T-cell (primary cell): ENCODE measurements at regions of chr13 and their contacts with region 1.

Region 1: DNA sequence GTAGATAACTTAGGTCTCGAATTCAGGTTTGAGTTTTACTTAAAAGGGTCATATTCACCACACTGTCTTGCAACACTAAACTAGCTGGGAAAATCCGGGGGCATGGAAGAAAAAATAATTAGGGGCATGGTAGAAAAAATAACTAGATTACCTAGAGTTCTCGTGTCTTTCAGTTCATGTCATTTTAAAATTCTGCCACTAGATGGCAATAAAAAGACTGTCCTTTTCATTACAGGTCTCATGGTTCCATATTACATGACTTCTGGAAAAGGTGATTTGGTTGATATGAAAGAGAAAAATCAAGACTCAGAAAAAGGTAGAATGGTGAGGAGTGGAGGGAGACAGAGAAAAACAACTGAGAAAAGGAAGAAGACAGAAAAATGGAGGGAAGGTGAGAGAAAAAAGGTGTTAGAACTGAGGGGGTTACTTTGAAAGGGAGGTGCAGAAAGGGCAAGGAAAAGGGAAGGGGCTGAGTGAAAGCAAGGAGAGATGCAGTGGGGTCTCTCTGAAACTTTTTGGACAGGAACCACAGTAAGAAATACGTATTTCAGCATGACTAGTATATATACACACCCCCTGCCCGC is 299.0 kb downstream of the KLF12 start:
- DNase-seq: peak in 1 of 35 experiments; percentile 68
- ATAC-seq: peak; percentile 46 to 60 (median 57)
- H3K4me3 ChIP-seq: no peak overlapping the region
- H3K4me3 Mint-ChIP-seq: no peak overlapping the region
- H3K27ac ChIP-seq: no peak overlapping the region
- H3K27ac Mint-ChIP-seq: no peak overlapping the region
- H3K4me1 ChIP-seq: peaks cover 5 to 7% of the 10 kb centered on the region in 2 experiments
- H3K4me1 Mint-ChIP-seq: peaks cover 59 to 61% (median 59%) of the 10 kb centered on the region in 3 donors
- H3K27me3 ChIP-seq: no peaks in the 10 kb centered on the region
- H3K27me3 Mint-ChIP-seq: no peaks in the 10 kb centered on the region

Region 2: DNA sequence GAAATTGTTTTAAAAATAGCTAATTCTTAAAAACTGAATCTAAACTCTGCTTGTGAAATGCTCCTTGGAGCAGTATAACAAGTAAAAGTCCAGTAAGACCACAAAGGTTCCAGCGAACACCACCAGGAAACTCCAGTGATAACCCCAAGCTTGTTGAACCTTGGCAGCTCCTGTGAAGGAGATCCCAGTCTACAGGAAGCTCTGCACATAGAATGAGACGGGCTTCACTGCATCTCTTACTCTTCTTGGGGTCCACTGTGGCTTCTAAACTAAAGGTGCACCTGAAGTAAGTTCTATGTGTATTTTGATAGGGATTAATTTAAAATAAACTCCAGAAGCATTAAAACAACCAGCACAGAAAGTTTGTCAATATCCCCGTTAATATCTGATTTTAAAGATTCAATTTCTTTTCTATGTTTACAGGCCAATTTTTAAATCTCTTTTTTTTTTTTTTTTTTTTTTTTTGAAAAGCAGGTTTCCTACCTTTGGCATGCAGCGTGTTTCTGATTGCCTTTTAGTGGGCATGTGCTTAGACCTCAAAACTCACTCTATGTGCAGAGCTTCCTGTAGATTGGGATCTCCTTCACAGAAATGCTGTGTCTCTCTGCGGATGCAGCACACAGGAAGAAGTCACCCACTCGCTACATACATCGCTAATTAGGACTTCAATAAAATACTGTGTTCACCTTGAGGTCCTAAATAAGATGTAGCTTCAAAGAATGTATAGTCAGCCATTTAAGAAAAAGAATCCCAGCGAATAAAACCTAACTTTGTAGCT is 209.5 kb before region 1 on chr13:
- CTCF ChIA-PET with region 1: no interaction called
- POLR2A ChIA-PET with region 1: interaction called in 1 of 2 experiments, 12 read pairs
- DNase-seq: peak in 31 of 35 experiments; percentile 2 to 69 (median 27)
- ATAC-seq: peak; percentile 98 to 100 (median 100)
- H3K4me3 ChIP-seq: no peak overlapping the region
- H3K4me3 Mint-ChIP-seq: peak overlapping the region in 2 of 3 donors; percentile 6 to 56
- H3K27ac ChIP-seq: peak overlapping the region; percentile 19
- H3K27ac Mint-ChIP-seq: peak overlapping the region; percentile 82 to 86
- H3K4me1 ChIP-seq: peaks cover 15 to 40% of the 10 kb centered on the region in 2 experiments
- H3K4me1 Mint-ChIP-seq: peaks cover 37 to 62% (median 53%) of the 10 kb centered on the region in 3 donors
- H3K27me3 ChIP-seq: no peaks in the 10 kb centered on the region
- H3K27me3 Mint-ChIP-seq: no peaks in the 10 kb centered on the region

Region 3: GRCh38 chr13:73708393-73708985 is 126.7 kb before region 1 on chr13:
- CTCF ChIA-PET with region 1: no interaction called
- POLR2A ChIA-PET with region 1: no interaction called
- DNase-seq: peak in 33 of 35 experiments; percentile 26 to 84 (median 56)
- ATAC-seq: peak; percentile 71 to 97 (median 86)
- H3K4me3 ChIP-seq: no peak overlapping the region
- H3K4me3 Mint-ChIP-seq: no peak overlapping the region
- H3K27ac ChIP-seq: no peak overlapping the region
- H3K27ac Mint-ChIP-seq: peak overlapping the region in 1 of 2 donors; percentile 43
- H3K4me1 ChIP-seq: peaks cover 0 to under 1% of the 10 kb centered on the region in 2 experiments
- H3K4me1 Mint-ChIP-seq: peaks cover 18 to 31% (median 30%) of the 10 kb centered on the region in 3 donors
- H3K27me3 ChIP-seq: no peaks in the 10 kb centered on the region
- H3K27me3 Mint-ChIP-seq: no peaks in the 10 kb centered on the region

Region 4: DNA sequence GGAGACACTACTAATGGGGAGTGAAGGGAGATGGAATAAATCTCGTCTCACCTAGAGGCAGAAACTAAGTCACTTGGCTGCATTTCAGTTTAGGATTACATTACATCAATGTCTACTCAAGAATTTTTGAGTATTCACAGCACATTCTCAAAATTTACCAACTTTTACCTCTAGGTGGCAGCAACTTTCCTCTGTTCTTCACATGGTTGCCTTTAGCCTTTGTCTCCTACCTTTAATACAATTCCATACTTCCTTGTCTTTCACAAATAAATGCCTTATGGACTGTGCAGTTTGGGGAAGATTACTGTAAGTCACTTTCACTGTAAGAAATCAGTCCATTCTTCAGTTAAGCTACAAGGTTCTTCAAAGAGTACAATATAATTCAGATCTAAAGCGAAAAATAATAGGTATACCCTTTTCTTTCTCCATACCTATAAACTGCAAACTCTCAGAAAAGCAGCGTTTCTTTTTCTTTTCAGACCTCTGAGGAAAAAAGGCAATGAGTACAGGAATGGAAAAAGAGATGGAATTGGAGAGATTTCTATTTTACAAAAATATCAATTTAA is 80.4 kb before region 1 on chr13:
- CTCF ChIA-PET with region 1: no interaction called
- POLR2A ChIA-PET with region 1: interaction called in 1 of 2 experiments, 13 read pairs
- DNase-seq: peak in 10 of 35 experiments; percentile 2 to 79 (median 14)
- ATAC-seq: peak; percentile 57 to 77 (median 71)
- H3K4me3 ChIP-seq: no peak overlapping the region
- H3K4me3 Mint-ChIP-seq: peak overlapping the region in 1 of 3 donors; percentile 2
- H3K27ac ChIP-seq: no peak overlapping the region
- H3K27ac Mint-ChIP-seq: peak overlapping the region; percentile 82 to 83
- H3K4me1 ChIP-seq: peaks cover 3 to 9% of the 10 kb centered on the region in 2 experiments
- H3K4me1 Mint-ChIP-seq: peaks cover 45 to 63% (median 53%) of the 10 kb centered on the region in 3 donors
- H3K27me3 ChIP-seq: no peaks in the 10 kb centered on the region
- H3K27me3 Mint-ChIP-seq: no peaks in the 10 kb centered on the region

Region 5: GRCh38 chr13:73849292-73849691 is 14.1 kb after region 1 on chr13:
- CTCF ChIA-PET with region 1: interaction called, 5 to 10 read pairs
- POLR2A ChIA-PET with region 1: interaction called in 1 of 2 experiments, 4 read pairs
- DNase-seq: peak in 20 of 35 experiments; percentile 5 to 58 (median 16)
- ATAC-seq: peak in 2 of 4 experiments; percentile 46 to 60
- H3K4me3 ChIP-seq: no peak overlapping the region
- H3K4me3 Mint-ChIP-seq: no peak overlapping the region
- H3K27ac ChIP-seq: no peak overlapping the region
- H3K27ac Mint-ChIP-seq: peak overlapping the region; percentile 24 to 25
- H3K4me1 ChIP-seq: peaks cover 5 to 8% of the 10 kb centered on the region in 2 experiments
- H3K4me1 Mint-ChIP-seq: peaks cover 33 to 64% (median 57%) of the 10 kb centered on the region in 3 donors
- H3K27me3 ChIP-seq: no peaks in the 10 kb centered on the region
- H3K27me3 Mint-ChIP-seq: no peaks in the 10 kb centered on the region

Region 6: GRCh38 chr13:73859841-73860240 is 24.6 kb after region 1 on chr13:
- CTCF ChIA-PET with region 1: no interaction called
- POLR2A ChIA-PET with region 1: no interaction called
- DNase-seq: peak in 1 of 35 experiments; percentile 45
- ATAC-seq: peak; percentile 52 to 71 (median 61)
- H3K4me3 ChIP-seq: no peak overlapping the region
- H3K4me3 Mint-ChIP-seq: peak overlapping the region; percentile 12 to 64 (median 31)
- H3K27ac ChIP-seq: peak overlapping the region; percentile 54
- H3K27ac Mint-ChIP-seq: peak overlapping the region; percentile 87
- H3K4me1 ChIP-seq: peaks cover 6 to 11% of the 10 kb centered on the region in 2 experiments
- H3K4me1 Mint-ChIP-seq: peaks cover 25 to 53% (median 51%) of the 10 kb centered on the region in 3 donors
- H3K27me3 ChIP-seq: no peaks in the 10 kb centered on the region
- H3K27me3 Mint-ChIP-seq: no peaks in the 10 kb centered on the region

Region 7: GRCh38 chr13:73991884-73992283 is 156.7 kb after region 1 on chr13:
- CTCF ChIA-PET with region 1: no interaction called
- POLR2A ChIA-PET with region 1: no interaction called
- DNase-seq: no peak
- ATAC-seq: no peak
- H3K4me3 ChIP-seq: no peak overlapping the region
- H3K4me3 Mint-ChIP-seq: no peak overlapping the region
- H3K27ac ChIP-seq: no peak overlapping the region
- H3K27ac Mint-ChIP-seq: peak overlapping the region; percentile 20 to 54
- H3K4me1 ChIP-seq: peaks cover 12 to 16% of the 10 kb centered on the region in 2 experiments
- H3K4me1 Mint-ChIP-seq: peaks cover 70 to 76% (median 75%) of the 10 kb centered on the region in 3 donors
- H3K27me3 ChIP-seq: no peaks in the 10 kb centered on the region
- H3K27me3 Mint-ChIP-seq: no peaks in the 10 kb centered on the region

Region 8: DNA sequence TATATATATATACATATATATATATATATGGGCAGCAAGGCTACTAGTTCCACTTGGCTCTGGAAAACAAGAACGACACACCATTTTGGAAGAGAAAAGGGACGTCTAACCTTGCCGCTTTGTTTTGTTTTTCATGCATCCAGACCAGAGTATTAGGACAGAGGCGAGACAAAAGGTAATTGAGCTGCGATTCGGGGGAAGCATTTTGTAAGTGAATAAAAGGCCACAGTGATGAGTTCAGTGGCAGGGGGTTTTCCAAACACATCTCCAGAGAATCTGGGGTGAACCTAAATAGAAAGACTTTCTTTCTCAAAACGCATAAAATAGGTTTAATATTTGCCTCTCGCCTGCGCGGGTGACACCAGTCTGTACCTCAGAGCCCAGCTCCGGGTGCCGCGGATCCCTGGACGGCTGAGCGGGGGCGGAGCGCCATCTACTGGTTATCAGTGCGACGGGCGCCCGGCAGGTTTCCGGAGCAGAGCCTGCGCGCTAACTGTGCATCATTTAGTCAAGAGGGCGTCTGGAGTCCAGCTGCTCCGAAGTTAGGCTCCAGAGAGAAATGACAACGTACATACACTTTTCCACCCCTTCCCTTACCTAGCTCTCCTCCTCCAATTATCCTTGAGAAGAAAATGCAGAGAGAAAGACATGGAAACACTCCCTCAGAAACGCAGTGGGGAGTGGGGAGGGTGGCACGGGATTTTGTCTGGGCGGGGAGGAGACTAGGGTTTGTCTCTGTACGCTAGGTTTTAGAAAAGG is 1384.4 kb after region 1 on chr13:
- CTCF ChIA-PET with region 1: interaction called in 1 of 2 experiments, 11 read pairs
- POLR2A ChIA-PET with region 1: no interaction called
- DNase-seq: peak; percentile 54 to 88 (median 79)
- ATAC-seq: peak; percentile 91 to 99 (median 98)
- H3K4me3 ChIP-seq: peak overlapping the region in 1 of 2 donors; percentile 17
- H3K4me3 Mint-ChIP-seq: peak overlapping the region; percentile 25 to 40 (median 34)
- H3K27ac ChIP-seq: no peak overlapping the region
- H3K27ac Mint-ChIP-seq: peak overlapping the region in 1 of 2 donors; percentile 38
- H3K4me1 ChIP-seq: peaks cover 0 to 9% of the 10 kb centered on the region in 2 experiments
- H3K4me1 Mint-ChIP-seq: peaks cover 6 to 9% (median 6%) of the 10 kb centered on the region in 3 donors
- H3K27me3 ChIP-seq: peaks cover 4 to 11% of the 10 kb centered on the region in 2 experiments
- H3K27me3 Mint-ChIP-seq: peaks cover 27 to 33% of the 10 kb centered on the region in 2 donors